Pancreas (tissue), 10 donors: ENCODE measurements at regions of chr3 and their contacts with region 1.

Region 1: GRCh38 chr3:114827495-114827894 is 319.6 kb downstream of the ZBTB20 start:
- DNase-seq: peak in 1 of 6 donors; percentile 26
- ATAC-seq: peak; percentile 73 to 92 (median 88)
- H3K4me3 ChIP-seq: no peak overlapping the region
- H3K27ac ChIP-seq: no peak overlapping the region
- H3K4me1 ChIP-seq: peaks cover 6 to 22% (median 13%) of the 10 kb centered on the region in 3 donors
- H3K27me3 ChIP-seq: no peaks in the 10 kb centered on the region
- CTCF ChIP-seq: peak in 3 of 4 donors; percentile 28 to 58 (median 56)

Region 2: GRCh38 chr3:113731694-113732093 is 1095.8 kb before region 1 on chr3:
- intact Hi-C with region 1: no loop called
- DNase-seq: no peak
- ATAC-seq: no peak
- H3K4me3 ChIP-seq: no peak overlapping the region
- H3K27ac ChIP-seq: no peak overlapping the region
- H3K4me1 ChIP-seq: peaks cover 0 to 1% (median under 1%) of the 10 kb centered on the region in 3 donors
- H3K27me3 ChIP-seq: no peaks in the 10 kb centered on the region
- CTCF ChIP-seq: no peak

Region 3: GRCh38 chr3:114764056-114764492 is 63.4 kb before region 1 on chr3:
- intact Hi-C with region 1: no loop called
- DNase-seq: no peak
- ATAC-seq: peak in 2 of 4 donors; percentile 17 to 43
- H3K4me3 ChIP-seq: no peak overlapping the region
- H3K27ac ChIP-seq: no peak overlapping the region
- H3K4me1 ChIP-seq: peaks cover 0 to 8% (median 4%) of the 10 kb centered on the region in 3 donors
- H3K27me3 ChIP-seq: no peaks in the 10 kb centered on the region
- CTCF ChIP-seq: no peak

Region 4: DNA sequence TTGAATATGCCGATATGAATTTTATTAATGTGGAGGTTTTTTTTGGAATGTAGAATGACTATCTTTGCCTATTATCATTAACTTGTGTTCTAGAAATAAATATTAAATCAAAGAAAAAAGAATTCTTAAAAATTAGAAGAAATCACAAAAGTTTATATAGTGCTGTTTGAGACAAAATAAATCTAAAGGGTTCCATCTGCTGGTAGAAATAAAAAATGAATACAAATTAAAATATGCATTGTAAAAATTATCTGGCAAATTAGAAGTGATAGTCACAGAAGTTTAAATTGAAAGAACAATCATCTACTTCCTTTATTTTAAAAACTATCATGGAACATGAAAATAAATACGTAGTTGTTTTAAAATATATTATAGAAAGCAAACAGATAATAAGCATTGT is 342.3 kb after region 1 on chr3:
- intact Hi-C with region 1: loop called in 1 of 3 experiments (anchors 10 kb)
- DNase-seq: no peak
- ATAC-seq: no peak
- H3K4me3 ChIP-seq: no peak overlapping the region
- H3K27ac ChIP-seq: no peak overlapping the region
- H3K4me1 ChIP-seq: no peaks in the 10 kb centered on the region
- H3K27me3 ChIP-seq: no peaks in the 10 kb centered on the region
- CTCF ChIP-seq: no peak

Region 5: GRCh38 chr3:115217678-115218451 is 390.4 kb after region 1 on chr3:
- intact Hi-C with region 1: no loop called
- DNase-seq: no peak
- ATAC-seq: peak in 3 of 4 donors; percentile 65 to 88 (median 81)
- H3K4me3 ChIP-seq: no peak overlapping the region
- H3K27ac ChIP-seq: no peak overlapping the region
- H3K4me1 ChIP-seq: no peaks in the 10 kb centered on the region
- H3K27me3 ChIP-seq: no peaks in the 10 kb centered on the region
- CTCF ChIP-seq: peak in 3 of 4 donors; percentile 20 to 31 (median 29)